Common myeloid progenitor, CD34-positive (primary cell): ENCODE measurements at regions of chr3 and their contacts with region 1.

Region 1: DNA sequence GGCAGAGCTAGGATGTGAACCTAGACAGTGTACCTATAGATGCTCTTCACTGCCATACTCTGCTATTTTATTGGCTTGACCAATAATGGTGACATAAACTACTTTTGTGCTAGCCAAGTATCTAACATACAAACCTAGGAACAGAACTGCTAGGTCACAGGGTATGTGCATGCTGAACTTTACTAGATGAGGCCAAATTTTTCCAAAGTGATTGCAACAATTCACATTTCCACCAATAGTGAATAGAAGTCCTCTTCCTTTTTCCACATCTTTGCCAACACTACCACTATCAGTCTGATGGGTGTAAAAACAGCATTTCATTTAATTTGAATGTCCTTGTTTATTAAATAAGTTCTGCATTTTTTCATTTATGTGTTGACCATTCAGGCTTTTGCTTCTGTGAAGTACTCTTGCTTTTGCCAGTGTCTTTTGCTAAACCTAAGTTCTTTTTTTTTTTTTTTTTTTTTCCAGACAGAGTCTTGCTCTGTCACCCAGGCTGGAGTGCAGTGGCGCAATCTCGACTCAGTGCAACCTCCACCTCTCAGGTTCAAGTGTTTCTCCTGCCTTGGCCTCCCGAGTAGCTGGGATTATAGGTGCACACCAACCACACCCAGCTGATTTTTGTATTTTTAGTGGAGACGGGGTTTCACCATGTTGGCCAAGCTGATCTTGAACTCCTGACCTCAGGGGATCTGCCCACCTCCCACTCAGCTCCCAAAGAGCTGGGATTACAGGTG is 54.1 kb downstream of the DCAF1 start:
- DNase-seq: no peak
- H3K4me3 ChIP-seq: no peak overlapping the region
- H3K27ac ChIP-seq: no peak overlapping the region
- H3K4me1 ChIP-seq: no peaks in the 10 kb centered on the region
- H3K27me3 ChIP-seq: no peaks in the 10 kb centered on the region

Region 2: GRCh38 chr3:51257870-51258269 is 187.8 kb before region 1 on chr3:
- CTCF ChIA-PET with region 1: no interaction called
- POLR2A ChIA-PET with region 1: no interaction called
- DNase-seq: peak in 2 of 3 donors; percentile 44 to 51
- H3K4me3 ChIP-seq: no peak overlapping the region
- H3K27ac ChIP-seq: no peak overlapping the region
- H3K4me1 ChIP-seq: no peaks in the 10 kb centered on the region
- H3K27me3 ChIP-seq: no peaks in the 10 kb centered on the region

Region 3: DNA sequence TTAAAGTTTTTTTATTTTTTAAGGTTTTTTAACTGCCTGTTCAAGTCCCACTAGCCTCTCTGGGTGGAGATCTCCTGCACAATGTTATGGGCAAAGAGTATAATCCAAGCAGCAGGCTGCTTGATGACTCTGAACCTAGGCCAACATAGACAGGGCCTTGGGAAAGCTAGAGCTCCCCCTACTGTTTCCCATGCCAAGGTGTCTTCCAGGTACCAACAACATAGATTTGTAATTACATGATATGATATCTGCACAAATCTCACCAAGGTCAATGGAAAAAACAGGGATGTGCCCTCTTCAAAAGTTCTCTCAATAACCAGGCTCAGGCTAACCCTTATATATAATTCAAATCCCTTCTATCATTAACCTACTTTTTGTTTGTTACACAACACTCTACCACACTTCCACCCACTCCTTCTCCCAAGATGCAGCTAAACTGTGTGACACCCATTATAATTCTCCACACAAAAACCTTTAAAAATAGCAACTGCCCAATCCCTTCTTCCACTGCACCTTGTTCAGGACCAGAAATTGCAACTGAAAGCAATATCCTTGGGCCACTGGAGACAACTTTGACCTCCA is 10.9 kb before region 1 on chr3:
- CTCF ChIA-PET with region 1: interaction called, 10 read pairs
- POLR2A ChIA-PET with region 1: interaction called, 4 read pairs
- DNase-seq: peak; percentile 56 to 83 (median 78)
- H3K4me3 ChIP-seq: no peak overlapping the region
- H3K27ac ChIP-seq: no peak overlapping the region
- H3K4me1 ChIP-seq: no peaks in the 10 kb centered on the region
- H3K27me3 ChIP-seq: no peaks in the 10 kb centered on the region